ENCODE measurements at regions of chr10 and their contacts with region 1.

Region 1: GRCh38 chr10:17023386-17024298 is 106.0 kb downstream of the CUBN start:
- DNase-seq: peak; percentile 99
- ATAC-seq: peak; percentile 81
- H3K4me3 ChIP-seq: no peak overlapping the region
- H3K27ac ChIP-seq: peak overlapping the region; percentile 71
- H3K4me1 ChIP-seq: peaks cover 12% of the 10 kb centered on the region
- H3K27me3 ChIP-seq: no peaks in the 10 kb centered on the region
- CTCF ChIP-seq: no peak
- POLR2A ChIP-seq: peak; percentile 74
- RAD21 ChIP-seq: peak; percentile 46; the same call in 1 of the 2 replicates

Region 2: DNA sequence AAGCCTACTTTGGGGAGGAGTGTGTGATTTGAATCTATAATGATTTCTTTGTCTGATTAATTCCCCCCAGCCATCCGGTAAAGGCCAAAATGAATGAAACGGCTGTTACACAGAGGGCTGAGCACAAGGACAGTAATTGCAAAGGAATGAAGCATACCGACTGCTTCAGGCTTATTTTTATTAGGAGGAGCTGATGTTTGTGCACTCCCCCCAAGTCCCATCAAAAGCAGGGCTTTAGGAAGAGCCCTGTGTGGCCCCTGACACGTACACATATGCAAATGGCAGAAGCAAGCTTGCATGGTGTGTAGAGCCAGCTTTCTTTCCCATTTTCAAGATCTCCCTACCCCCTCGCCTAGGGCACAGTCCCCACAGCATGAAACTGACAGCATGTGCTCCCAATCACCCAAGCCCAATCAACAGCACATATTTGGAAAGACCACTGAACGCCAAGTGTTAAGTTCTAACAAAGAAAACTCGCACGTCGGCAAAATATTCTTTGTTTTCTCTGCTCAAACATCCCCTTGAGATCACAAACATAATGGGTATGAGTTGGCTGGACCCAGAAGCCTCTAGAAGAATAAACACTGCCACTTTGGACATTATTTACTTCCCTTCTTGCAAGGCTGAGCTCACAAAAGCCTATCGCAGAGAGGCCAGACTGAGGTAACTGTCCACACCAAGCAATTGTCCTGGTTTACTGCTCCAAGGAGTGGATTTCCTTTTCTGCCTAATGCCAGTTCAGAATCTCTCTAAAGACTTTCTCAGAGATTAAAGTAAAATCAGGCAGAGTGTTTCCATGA is 37.0 kb before region 1 on chr10:
- CTCF ChIA-PET with region 1: no interaction called
- POLR2A ChIA-PET with region 1: no interaction called
- dilution Hi-C with region 1: no loop called
- in situ Hi-C with region 1: no loop called
- intact Hi-C with region 1: loop called (anchors 1 kb)
- DNase-seq: peak; percentile 88
- ATAC-seq: peak; percentile 92
- H3K4me3 ChIP-seq: no peak overlapping the region
- H3K27ac ChIP-seq: peak overlapping the region; percentile 95
- H3K4me1 ChIP-seq: peaks cover 25% of the 10 kb centered on the region
- H3K27me3 ChIP-seq: no peaks in the 10 kb centered on the region
- CTCF ChIP-seq: no peak
- POLR2A ChIP-seq: no peak
- RAD21 ChIP-seq: peak; percentile 22; the same call in 1 of the 2 replicates